Esophagus muscularis mucosa (tissue), 4 donors: ENCODE measurements at regions of chr4 and their contacts with region 1.

Region 1: DNA sequence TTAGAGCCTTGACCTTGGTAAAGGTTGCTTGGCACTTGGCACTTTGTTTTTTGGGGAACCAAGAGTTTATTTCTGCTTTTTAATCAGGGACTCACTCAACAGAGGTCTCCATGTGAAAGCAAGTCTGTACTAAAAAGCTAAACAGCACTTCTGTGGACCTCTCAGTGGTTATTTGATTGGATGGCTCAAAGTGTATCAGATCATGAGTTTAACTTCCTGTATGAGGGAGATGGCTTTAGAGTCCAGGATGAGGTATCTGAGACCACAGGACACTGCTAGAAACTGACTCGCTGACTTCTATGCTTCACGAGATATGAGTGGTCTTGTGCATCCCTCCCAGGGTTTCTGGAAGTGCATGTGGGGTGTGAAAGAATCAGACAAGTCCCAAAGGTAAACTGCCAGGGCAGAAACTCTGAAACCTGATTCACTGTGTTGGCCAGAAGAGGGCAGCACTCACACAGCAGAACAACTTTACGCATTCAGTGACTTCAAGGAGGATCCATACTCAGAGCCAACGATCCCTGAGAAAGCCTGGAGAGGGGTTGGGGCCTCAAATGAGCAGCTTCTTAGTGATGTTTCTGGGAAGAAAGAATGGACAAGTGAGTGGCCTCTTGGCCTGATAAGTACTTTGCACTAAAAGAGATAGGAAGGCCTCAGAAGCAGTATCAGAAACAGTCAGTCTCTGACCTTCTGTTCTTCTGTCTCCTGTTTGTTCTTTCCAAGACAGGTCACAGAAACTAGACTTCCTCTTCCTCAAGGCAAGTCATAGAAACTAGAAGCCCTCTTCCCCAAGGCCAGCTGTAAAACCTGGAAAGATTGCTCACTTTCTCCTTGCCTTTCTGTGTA is 220.3 kb upstream of the CXCL13 start:
- DNase-seq: no peak
- H3K4me3 ChIP-seq: no peak overlapping the region
- H3K27ac ChIP-seq: no peak overlapping the region
- H3K4me1 ChIP-seq: peaks cover 0 to 3% (median 0%) of the 10 kb centered on the region in 4 donors
- H3K27me3 ChIP-seq: no peaks in the 10 kb centered on the region
- CTCF ChIP-seq: peak; percentile 74 to 85 (median 81)
- EP300 ChIP-seq: no peak
- POLR2A ChIP-seq: no peak

Region 2: DNA sequence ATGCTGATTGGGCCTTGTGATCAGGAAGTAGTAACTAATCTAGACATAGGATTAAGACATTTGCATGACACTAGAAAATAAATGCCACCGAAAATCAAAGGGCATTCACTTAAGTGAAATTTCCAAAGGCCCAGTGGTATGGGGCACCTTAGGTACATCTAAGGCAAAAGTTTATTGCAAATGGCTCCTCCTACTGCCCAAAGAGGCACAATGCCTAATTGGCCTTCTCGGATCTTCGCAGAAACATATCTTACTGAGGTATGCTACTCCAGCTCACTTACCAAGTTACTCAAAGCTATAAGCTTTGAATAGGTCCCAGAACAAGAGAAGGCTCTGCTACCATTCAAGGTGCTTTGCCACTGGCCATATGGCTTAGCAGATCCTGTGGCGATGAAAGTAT is 45.5 kb after region 1 on chr4:
- intact Hi-C with region 1: loop called (anchors 2 kb)
- DNase-seq: no peak
- H3K4me3 ChIP-seq: no peak overlapping the region
- H3K27ac ChIP-seq: no peak overlapping the region
- H3K4me1 ChIP-seq: peaks cover 4 to 30% (median 27%) of the 10 kb centered on the region in 4 donors
- H3K27me3 ChIP-seq: no peaks in the 10 kb centered on the region
- CTCF ChIP-seq: no peak
- EP300 ChIP-seq: no peak
- POLR2A ChIP-seq: no peak

Region 3: DNA sequence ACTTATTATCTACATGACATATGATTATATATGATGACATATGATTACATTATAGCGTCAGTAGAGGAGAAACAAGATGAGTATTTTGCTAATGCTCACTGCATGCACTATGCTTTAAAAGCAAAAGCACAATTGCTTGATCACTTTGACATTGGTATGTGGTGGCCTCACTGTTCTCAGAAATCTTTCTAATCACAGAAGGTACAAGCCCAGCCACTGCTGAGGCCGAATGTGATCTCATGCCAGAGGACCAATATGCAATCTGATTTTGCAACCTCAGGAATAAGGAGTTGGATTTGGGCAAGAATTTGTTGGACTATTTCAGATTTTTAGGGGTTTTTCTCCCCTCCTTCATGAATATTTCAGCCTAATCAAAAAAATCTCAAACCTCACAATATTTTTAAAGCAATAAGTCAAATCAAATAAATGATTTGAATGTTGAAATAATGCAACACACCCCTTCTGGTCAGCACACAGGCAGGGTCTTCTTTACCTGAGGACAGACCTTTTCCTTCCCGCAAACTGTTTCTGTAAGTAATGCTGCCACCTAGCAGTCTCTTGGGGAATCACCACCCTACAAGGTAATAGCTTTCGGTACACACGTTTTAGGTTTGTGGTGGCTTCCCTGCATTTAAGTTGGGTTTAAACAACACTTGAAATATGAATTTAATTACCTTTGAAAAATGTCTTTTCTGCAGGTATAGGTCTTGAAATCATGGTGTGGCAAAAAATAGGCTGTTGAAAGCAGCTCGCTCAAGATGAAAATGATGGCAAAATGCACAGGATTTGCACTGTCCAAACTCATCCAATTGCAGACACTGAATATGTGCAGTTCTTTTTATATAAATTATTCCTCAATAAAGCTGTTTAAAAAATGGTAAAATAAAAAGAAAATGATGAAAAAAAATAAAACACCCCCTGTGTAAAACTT is 215.4 kb after region 1 on chr4:
- intact Hi-C with region 1: loop called (anchors 2 kb)
- DNase-seq: no peak
- H3K4me3 ChIP-seq: no peak overlapping the region
- H3K27ac ChIP-seq: no peak overlapping the region
- H3K4me1 ChIP-seq: peaks cover 0 to 8% (median 0%) of the 10 kb centered on the region in 4 donors
- H3K27me3 ChIP-seq: no peaks in the 10 kb centered on the region
- CTCF ChIP-seq: peak; percentile 71 to 82 (median 77)
- EP300 ChIP-seq: no peak
- POLR2A ChIP-seq: no peak

Region 4: DNA sequence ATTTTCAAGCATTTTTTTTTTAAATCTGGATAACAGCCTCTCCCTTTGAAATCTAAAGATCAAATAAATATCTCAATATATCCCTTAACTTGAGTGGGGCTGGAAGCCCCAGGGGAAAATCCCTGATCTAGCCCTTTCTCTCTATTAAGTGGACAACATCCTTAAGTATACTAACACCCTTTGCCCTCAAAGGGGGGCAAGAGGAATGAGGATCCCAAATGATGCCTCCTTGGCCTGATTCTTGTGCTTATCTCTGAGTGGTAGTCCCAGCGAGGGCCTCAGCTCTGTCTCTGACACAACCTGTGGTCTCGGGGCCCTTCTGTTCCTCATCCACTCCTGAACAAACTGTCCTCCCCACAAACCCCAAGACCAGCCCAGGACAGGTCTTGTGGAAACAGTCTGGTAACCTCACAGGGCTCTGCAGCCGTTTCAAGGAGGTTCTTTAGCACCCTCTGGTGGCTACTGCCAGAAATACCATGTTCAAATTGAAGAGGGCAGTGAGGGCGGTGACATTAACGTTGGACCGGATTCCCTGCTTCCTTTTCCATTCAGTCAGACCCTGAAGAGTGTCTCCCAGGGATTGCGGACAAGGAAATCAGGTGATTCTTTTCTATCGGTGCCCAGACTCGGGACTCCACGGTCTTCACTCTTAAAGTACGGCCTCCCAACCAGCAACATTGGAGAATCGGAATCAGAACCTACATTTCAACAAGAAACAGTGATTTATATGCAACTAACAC is 233.2 kb after region 1 on chr4:
- intact Hi-C with region 1: loop called (anchors 5 kb)
- DNase-seq: no peak
- H3K4me3 ChIP-seq: no peak overlapping the region
- H3K27ac ChIP-seq: no peak overlapping the region
- H3K4me1 ChIP-seq: peaks cover 0 to 9% (median 4%) of the 10 kb centered on the region in 4 donors
- H3K27me3 ChIP-seq: no peaks in the 10 kb centered on the region
- CTCF ChIP-seq: peak; percentile 67 to 83 (median 68)
- EP300 ChIP-seq: no peak
- POLR2A ChIP-seq: no peak

Region 5: DNA sequence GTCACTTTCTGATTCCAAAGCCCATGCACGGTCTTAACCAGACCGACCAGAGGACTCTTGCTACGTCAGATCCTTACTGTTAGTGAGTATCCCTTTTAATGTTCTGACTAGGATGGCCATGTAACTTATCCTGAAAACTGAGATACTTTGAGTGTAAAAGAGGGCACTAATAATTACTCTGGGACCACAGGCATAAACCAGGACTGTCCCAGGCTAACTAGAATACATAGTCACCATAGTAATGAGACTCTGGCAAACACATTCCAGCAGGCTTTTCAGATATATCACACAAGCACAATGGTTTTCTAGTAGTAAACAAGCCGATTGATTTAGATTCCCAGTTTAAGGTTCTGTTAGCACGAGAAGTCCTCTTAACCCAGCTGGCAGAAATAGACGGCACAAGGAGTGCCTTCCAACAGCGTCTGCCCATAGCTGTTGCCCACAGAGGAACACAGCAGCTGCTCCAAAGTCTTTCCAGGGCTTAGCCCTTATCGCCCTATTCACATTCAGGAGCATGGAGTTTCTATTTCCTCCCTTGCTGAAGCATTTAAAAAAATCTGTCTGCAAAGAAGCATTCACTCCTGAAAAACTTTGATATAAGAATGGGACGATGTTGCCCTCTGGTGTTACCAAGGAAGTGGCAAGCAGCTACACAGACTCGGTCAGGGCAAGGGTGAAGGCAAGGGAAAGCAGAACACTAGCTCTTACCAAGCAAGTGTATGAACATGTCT is 312.7 kb after region 1 on chr4:
- intact Hi-C with region 1: loop called (anchors 5 kb)
- DNase-seq: no peak
- H3K4me3 ChIP-seq: no peak overlapping the region
- H3K27ac ChIP-seq: peak overlapping the region in 1 of 4 donors; percentile 33
- H3K4me1 ChIP-seq: peaks cover 5 to 22% (median 13%) of the 10 kb centered on the region in 4 donors
- H3K27me3 ChIP-seq: no peaks in the 10 kb centered on the region
- CTCF ChIP-seq: peak; percentile 41 to 51 (median 44)
- EP300 ChIP-seq: no peak
- POLR2A ChIP-seq: no peak